ENCODE measurements at regions of chr3 and their contacts with region 1.

Region 1: DNA sequence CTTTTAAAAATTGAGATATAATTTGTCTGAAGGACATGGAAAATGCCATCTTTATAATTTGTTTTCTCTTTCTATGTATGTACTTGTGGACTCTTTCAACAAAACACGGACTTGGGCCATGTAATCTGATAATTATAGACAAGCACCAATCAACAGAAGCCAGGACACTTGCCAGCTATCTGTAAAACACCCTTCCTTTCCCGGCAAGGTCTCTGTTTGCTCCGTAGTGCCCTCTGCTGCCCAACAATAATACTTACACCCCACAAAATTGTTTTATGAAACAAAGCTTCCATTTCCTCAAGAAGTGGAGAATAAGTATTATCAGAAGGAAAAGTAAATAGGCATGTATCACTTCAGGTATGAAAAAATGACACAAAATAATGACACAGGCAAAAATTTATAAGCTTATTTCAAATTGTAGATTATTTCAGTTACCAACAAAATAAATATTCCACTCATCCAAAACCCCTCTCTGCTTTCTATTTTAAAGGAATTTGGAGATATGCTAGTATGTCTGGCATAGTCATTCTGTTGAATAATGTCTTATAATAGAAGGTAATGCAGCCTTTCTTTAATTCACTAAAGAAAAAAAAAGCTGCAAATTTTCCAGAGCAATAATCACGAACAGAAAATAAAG is 32.8 kb downstream of the MYH15 start:
- DNase-seq: peak in 2 of 3 donors; percentile 64 to 78
- ATAC-seq: peak; percentile 99
- H3K4me3 ChIP-seq: no peak overlapping the region
- H3K4me1 ChIP-seq: no peaks in the 10 kb centered on the region
- CTCF ChIP-seq: peak; percentile 27

Region 2: GRCh38 chr3:108153451-108153981 is 324.1 kb before region 1 on chr3:
- intact Hi-C with region 1: loop called in 1 of 2 experiments (anchors 5 kb)
- DNase-seq: peak in 2 of 3 donors; percentile 51 to 69
- ATAC-seq: peak; percentile 82
- H3K4me3 ChIP-seq: no peak overlapping the region
- H3K4me1 ChIP-seq: no peaks in the 10 kb centered on the region
- CTCF ChIP-seq: peak; percentile 11

Region 3: GRCh38 chr3:108301695-108302404 is 175.8 kb before region 1 on chr3:
- intact Hi-C with region 1: no loop called
- DNase-seq: no peak
- ATAC-seq: no peak
- H3K4me3 ChIP-seq: no peak overlapping the region
- H3K4me1 ChIP-seq: no peaks in the 10 kb centered on the region
- CTCF ChIP-seq: no peak

Region 4: GRCh38 chr3:108826309-108827187 is 348.9 kb after region 1 on chr3:
- intact Hi-C with region 1: no loop called
- DNase-seq: no peak
- ATAC-seq: no peak
- H3K4me3 ChIP-seq: no peak overlapping the region
- H3K4me1 ChIP-seq: no peaks in the 10 kb centered on the region
- CTCF ChIP-seq: no peak

Measured in mucosa of descending colon (tissue), 3 donors.